Activated T-helper 1 cell treated with anti-CD3 and anti-CD28 coated beads, Interleukin-12 subunit alpha, Interleukin-12 subunit beta, Interleukin-2, Interleukin-4 antibody, amounts not matched to agents 30 ng/mL and 10 ng/mL and 1 ng/mL, durations not matched to agents 14 hours and 24 hours and 36 hours (primary cell): ENCODE measurements at regions of chr4 and their contacts with region 1.

Region 1: GRCh38 chr4:38310446-38311043 is 350.3 kb downstream of the PTTG2 start:
- DNase-seq: peak; percentile 83
- H3K4me3 Mint-ChIP-seq: peak overlapping the region; percentile 51
- H3K27ac Mint-ChIP-seq: peak overlapping the region; percentile 90
- H3K4me1 Mint-ChIP-seq: peaks cover 81% of the 10 kb centered on the region
- H3K27me3 Mint-ChIP-seq: peaks cover 15% of the 10 kb centered on the region

Region 2: DNA sequence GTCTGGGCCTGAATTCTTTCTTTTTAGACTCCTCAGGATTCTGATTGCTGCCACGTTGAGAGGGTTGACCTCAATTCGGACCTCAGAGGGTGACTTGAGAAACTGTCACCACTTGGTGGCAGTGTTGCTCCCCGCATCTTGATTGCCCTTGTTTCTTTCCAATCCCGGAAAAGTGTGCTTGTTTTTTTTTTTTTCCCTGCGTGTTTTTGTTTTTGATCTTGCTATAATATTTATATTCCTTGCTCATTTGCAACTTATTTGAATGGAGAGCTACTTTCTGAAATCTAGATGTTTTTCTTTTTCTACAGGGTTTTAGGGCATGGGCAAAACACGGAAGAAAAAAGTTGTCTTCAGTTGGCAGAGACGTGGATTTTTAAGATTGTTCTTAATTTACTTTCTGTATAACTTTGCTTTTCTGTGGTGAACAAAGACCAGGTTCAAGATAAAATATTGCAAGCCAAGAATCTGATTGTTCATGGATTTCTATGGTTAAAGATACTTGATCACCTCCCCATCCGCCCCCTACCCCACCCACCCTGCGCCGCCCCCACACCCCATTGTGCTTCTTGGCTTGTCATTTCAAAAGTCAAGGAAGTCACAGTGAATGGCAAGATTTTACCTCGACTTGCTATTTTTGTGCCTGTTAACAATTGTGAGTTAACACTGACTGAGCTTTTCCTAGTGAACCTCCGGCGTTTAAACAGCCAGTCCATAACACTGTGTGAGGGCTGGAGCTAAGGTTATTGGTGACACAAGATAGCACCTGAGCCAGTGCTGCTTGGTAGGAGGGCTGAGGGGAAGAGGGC is 248.3 kb before region 1 on chr4:
- intact Hi-C with region 1: loop called (anchors 2 kb)
- DNase-seq: peak; percentile 42
- H3K4me3 Mint-ChIP-seq: peak overlapping the region; percentile 83
- H3K27ac Mint-ChIP-seq: peak overlapping the region; percentile 69
- H3K4me1 Mint-ChIP-seq: peaks cover 16% of the 10 kb centered on the region
- H3K27me3 Mint-ChIP-seq: no peaks in the 10 kb centered on the region

Region 3: GRCh38 chr4:38334810-38335537 is 24.4 kb after region 1 on chr4:
- intact Hi-C with region 1: loop called (anchors 1 kb)
- DNase-seq: no peak
- H3K4me3 Mint-ChIP-seq: peak overlapping the region; percentile 22
- H3K27ac Mint-ChIP-seq: peak overlapping the region; percentile 55
- H3K4me1 Mint-ChIP-seq: peaks cover 32% of the 10 kb centered on the region
- H3K27me3 Mint-ChIP-seq: peaks cover 42% of the 10 kb centered on the region

Region 4: GRCh38 chr4:38560768-38561558 is 250.4 kb after region 1 on chr4:
- intact Hi-C with region 1: loop called (anchors 1 kb)
- DNase-seq: peak; percentile 8
- H3K4me3 Mint-ChIP-seq: no peak overlapping the region
- H3K27ac Mint-ChIP-seq: no peak overlapping the region
- H3K4me1 Mint-ChIP-seq: peaks cover 13% of the 10 kb centered on the region
- H3K27me3 Mint-ChIP-seq: peaks cover 26% of the 10 kb centered on the region

Region 5: GRCh38 chr4:38804654-38805295 is 494.2 kb after region 1 on chr4 and contains the start of gene TLR1:
- intact Hi-C with region 1: loop called (anchors 2 kb)
- DNase-seq: no peak
- H3K4me3 Mint-ChIP-seq: peak within 1 kb of the TSS; percentile 81
- H3K27ac Mint-ChIP-seq: peak within 1 kb of the TSS; percentile 87
- H3K4me1 Mint-ChIP-seq: peaks cover 38% of the 10 kb centered on the region
- H3K27me3 Mint-ChIP-seq: no peaks in the 10 kb centered on the region
- total RNA-seq, gene TLR1: 1.9 and 2.7 TPM in 2 replicates